A549 (cell line): ENCODE measurements at regions of chr17 and their contacts with region 1.

Region 1: DNA sequence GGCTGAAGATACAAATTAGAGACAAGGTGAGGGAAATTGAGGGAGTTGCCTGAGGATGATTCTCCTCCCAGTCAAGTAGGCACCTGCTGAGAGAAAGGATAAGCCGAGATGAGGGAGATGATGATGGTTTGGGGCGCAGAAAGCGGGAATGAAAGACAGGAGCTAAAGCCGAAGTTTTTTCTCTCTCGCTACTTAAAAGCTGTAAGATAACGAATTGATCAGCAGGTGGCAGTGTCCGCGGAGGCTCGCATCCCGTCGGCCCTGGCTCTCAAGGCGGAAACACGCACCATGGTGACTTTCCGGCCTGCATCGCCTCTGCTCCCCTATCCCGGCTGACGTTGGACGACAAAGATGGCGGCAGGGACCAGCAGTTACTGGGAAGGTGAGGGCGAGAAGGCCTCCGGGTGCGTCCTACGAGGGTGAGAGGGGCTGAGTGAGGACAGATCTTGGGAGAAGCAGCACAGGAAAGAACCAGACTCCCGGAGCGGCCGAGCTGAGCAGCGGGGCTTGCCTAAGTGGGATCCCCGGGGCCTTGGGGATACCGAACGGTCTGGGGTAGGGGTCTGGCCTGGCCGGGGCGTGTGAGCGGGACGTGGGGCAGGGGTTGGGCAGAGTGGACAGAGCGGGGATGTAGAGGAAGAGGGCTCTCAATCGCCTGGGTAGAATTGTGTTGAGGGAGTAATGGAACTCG is at the start of gene GOSR1:
- DNase-seq: peak; percentile 96 to 98
- ATAC-seq: peak; percentile 100
- H3K4me3 ChIP-seq: peak within 1 kb of the TSS; percentile 77
- H3K27ac ChIP-seq: peak within 1 kb of the TSS; percentile 95
- H3K4me1 ChIP-seq: peaks cover 14% of the 10 kb centered on the region; the same call in 2 of the 3 replicates
- CTCF ChIP-seq: peak; percentile 84
- EP300 ChIP-seq: no peak
- POLR2A ChIP-seq: peak; percentile 94
- RAD21 ChIP-seq: peak; percentile 55 to 57
- polyA plus RNA-seq, gene GOSR1: 46.1 and 49.6 TPM in 2 replicates

Region 2: GRCh38 chr17:30454635-30455034 is 22.6 kb before region 1 on chr17:
- CTCF ChIA-PET with region 1: interaction called, 15 read pairs
- POLR2A ChIA-PET with region 1: no interaction called
- DNase-seq: peak in 1 of 2 experiments; percentile 24
- ATAC-seq: no peak
- H3K4me3 ChIP-seq: no peak overlapping the region
- H3K27ac ChIP-seq: no peak overlapping the region
- H3K4me1 ChIP-seq: peaks cover 22% of the 10 kb centered on the region
- CTCF ChIP-seq: no peak
- EP300 ChIP-seq: no peak
- POLR2A ChIP-seq: no peak
- RAD21 ChIP-seq: no peak

Region 3: GRCh38 chr17:30495586-30495985 is 18.4 kb after region 1 on chr17:
- CTCF ChIA-PET with region 1: interaction called, 15 read pairs
- POLR2A ChIA-PET with region 1: no interaction called
- DNase-seq: no peak
- ATAC-seq: no peak
- H3K4me3 ChIP-seq: no peak overlapping the region
- H3K27ac ChIP-seq: no peak overlapping the region
- H3K4me1 ChIP-seq: no peaks in the 10 kb centered on the region
- CTCF ChIP-seq: no peak
- EP300 ChIP-seq: no peak
- POLR2A ChIP-seq: no peak
- RAD21 ChIP-seq: no peak

Region 4: DNA sequence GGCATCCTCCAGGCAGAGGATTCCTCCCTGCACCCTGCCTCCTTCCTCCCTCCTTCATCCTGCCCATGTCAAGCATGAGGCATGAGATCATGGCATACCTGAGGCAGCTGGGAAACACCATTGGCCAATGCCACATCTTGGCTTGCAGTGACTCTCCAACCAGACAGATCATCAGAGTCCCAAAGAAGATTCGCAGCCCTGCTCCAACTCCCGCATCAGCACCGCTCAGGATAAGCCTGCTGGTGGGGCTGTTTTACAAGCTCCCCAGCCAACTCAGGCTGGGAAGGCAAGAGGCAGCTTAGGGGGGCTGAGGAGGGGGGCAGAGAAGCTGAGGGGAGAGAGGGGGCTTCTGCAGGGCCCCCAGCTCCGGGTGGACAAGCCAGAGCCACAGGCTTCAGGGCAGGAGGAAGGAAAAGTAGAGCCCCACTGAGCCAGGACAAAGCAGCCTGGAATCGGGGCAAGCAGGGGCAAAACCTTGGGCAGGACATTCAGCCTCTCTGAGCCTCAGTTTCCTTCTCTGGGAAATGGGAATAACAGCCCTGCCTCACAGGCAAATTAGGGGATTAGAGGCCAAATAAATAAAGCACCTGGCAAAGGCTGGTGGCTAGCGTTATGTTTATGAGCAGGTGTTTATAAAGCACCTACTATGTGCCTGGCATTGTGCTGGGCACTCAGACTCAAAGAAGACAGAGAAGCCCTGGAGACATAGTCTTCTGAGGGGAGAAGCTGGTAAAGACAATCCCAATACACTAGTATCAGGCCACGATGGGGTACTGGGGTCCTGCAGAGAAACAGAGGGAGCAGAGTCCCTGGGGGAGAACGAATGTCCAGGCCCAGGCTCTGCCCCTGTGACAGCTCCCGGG is 88.1 kb after region 1 on chr17:
- CTCF ChIA-PET with region 1: no interaction called
- POLR2A ChIA-PET with region 1: no interaction called
- DNase-seq: peak in 1 of 2 experiments; percentile 25
- ATAC-seq: 0 out of 6 replicates have a peak, but pooled peaks of 1 of the 2 experiments have one; percentile 41
- H3K4me3 ChIP-seq: no peak overlapping the region
- H3K27ac ChIP-seq: no peak overlapping the region
- H3K4me1 ChIP-seq: no peaks in the 10 kb centered on the region
- CTCF ChIP-seq: no peak
- EP300 ChIP-seq: no peak
- POLR2A ChIP-seq: no peak
- RAD21 ChIP-seq: no peak

Region 5: GRCh38 chr17:30600049-30600829 is 123.0 kb after region 1 on chr17:
- CTCF ChIA-PET with region 1: interaction called, 4 read pairs
- POLR2A ChIA-PET with region 1: interaction called, 16 read pairs
- DNase-seq: peak; percentile 89 to 98
- ATAC-seq: peak; percentile 96 to 98
- H3K4me3 ChIP-seq: peak overlapping the region; percentile 83
- H3K27ac ChIP-seq: peak overlapping the region; percentile 94 to 96
- H3K4me1 ChIP-seq: peaks cover 11% of the 10 kb centered on the region; the same call in 2 of the 3 replicates
- CTCF ChIP-seq: peak; percentile 70
- EP300 ChIP-seq: no peak
- POLR2A ChIP-seq: peak; percentile 89
- RAD21 ChIP-seq: no peak; a peak in 2 of 5 replicates

Region 6: GRCh38 chr17:30716461-30717300 is 239.5 kb after region 1 on chr17:
- CTCF ChIA-PET with region 1: interaction called, 15 read pairs
- POLR2A ChIA-PET with region 1: no interaction called
- DNase-seq: peak in 1 of 2 experiments; percentile 69
- ATAC-seq: peak; percentile 17 to 38; a peak in 4 of 6 replicates
- H3K4me3 ChIP-seq: no peak overlapping the region
- H3K27ac ChIP-seq: no peak overlapping the region
- H3K4me1 ChIP-seq: no peaks in the 10 kb centered on the region
- CTCF ChIP-seq: peak; percentile 46; the same call in 2 of the 3 replicates
- EP300 ChIP-seq: no peak
- POLR2A ChIP-seq: no peak
- RAD21 ChIP-seq: peak; percentile 52 to 54; a peak in 4 of 5 replicates